Activated B cell treated with CpG ODN at 0.5 μM for 24 hours (primary cell): ENCODE measurements at regions of chr10 and their contacts with region 1.

Region 1: DNA sequence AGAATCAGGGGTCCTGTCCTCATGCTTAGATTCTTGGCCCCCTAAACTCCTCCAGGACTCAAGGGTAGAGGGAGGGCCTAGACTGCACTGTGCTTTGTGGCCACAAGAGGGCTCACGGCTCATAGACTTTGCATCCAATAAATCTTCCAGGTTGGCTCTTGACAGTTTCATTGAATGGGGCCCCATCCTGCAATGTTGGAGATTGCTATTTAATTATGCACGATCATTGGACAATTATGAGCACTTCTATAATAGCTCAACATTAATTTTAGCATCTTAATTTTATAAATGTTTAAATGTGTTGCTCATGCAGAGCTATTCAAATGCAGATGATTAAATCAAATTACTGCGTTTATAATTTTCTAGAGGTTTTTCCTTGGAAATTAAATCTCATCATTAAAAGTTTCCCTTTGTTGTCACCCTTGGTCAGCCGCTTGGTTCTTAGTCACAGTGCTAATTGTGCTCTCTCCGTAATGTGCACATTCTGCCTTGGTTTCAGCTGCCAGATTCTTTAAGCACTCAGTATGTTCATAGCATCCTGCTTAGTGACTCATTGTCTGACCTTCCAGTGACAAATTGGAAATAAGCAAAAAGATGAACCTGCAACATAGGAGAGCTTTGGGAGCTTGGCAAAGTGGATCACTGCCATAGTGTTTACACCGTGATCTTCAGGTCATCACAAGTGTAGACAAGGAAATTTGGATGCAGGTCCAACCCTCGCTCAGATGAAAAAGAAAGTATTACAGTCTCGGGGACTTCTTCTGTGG is 33.4 kb upstream of the PLPP4 start:
- DNase-seq: no peak
- ATAC-seq: no peak
- H3K4me3 Mint-ChIP-seq: no peak overlapping the region
- H3K27ac Mint-ChIP-seq: no peak overlapping the region
- H3K4me1 Mint-ChIP-seq: no peaks in the 10 kb centered on the region
- H3K27me3 Mint-ChIP-seq: peaks cover 6% of the 10 kb centered on the region
- CTCF ChIP-seq: no peak

Region 2: GRCh38 chr10:120735773-120736371 is 312.3 kb after region 1 on chr10:
- CTCF ChIA-PET with region 1: no interaction called
- POLR2A ChIA-PET with region 1: no interaction called
- intact Hi-C with region 1: loop called (anchors 5 kb)
- DNase-seq: no peak
- ATAC-seq: no peak
- H3K4me3 Mint-ChIP-seq: no peak overlapping the region
- H3K27ac Mint-ChIP-seq: no peak overlapping the region
- H3K4me1 Mint-ChIP-seq: no peaks in the 10 kb centered on the region
- H3K27me3 Mint-ChIP-seq: peaks cover 17% of the 10 kb centered on the region
- CTCF ChIP-seq: peak; percentile 40

Region 3: DNA sequence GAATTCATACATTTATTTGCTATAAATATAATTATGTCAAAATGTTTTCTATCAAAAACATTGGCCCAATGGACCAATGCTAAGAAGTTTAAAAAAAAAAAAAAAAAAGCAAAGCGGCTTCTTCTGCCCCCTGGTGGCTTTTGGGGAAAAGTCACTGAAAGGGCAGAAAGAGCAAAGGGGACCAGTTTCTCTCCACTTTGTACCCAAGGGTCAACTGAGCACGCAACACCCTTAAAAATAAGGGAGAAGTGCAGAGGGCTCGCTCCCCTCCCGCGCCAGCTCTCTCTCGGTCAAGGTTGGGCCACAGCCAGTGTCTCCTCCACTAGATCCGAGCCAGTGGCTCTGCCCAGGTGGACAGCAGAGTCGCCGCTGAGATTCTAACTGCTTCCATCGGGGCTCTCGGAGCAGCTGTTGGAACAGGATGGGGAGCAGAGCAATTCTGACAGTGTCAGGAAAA is 1311.0 kb after region 1 on chr10:
- CTCF ChIA-PET with region 1: no interaction called
- POLR2A ChIA-PET with region 1: no interaction called
- intact Hi-C with region 1: loop called (anchors 10 kb)
- DNase-seq: no peak
- ATAC-seq: no peak
- H3K4me3 Mint-ChIP-seq: no peak overlapping the region
- H3K27ac Mint-ChIP-seq: no peak overlapping the region
- H3K4me1 Mint-ChIP-seq: no peaks in the 10 kb centered on the region
- H3K27me3 Mint-ChIP-seq: peaks cover 10% of the 10 kb centered on the region
- CTCF ChIP-seq: peak; percentile 58